ENCODE measurements at regions of chr9 and their contacts with region 1.

Region 1: GRCh38 chr9:121322037-121322775 is 47.8 kb downstream of the STOM start:
- DNase-seq: no peak
- H3K4me3 ChIP-seq: no peak overlapping the region
- H3K27ac ChIP-seq: peak overlapping the region in 1 of 2 experiments; percentile 81; a peak in 2 of 4 replicates
- H3K4me1 ChIP-seq: peaks cover 0 to 5% of the 10 kb centered on the region in 2 experiments; a peak in 2 of 4 replicates
- H3K27me3 ChIP-seq: no peaks in the 10 kb centered on the region
- CTCF ChIP-seq: no peak
- EP300 ChIP-seq: no peak
- RAD21 ChIP-seq: no peak

Region 2: GRCh38 chr9:121278535-121279261 is 43.5 kb before region 1 on chr9:
- CTCF ChIA-PET with region 1: interaction called, 22 read pairs
- POLR2A ChIA-PET with region 1: no interaction called
- DNase-seq: peak; percentile 59
- H3K4me3 ChIP-seq: peak overlapping the region in 1 of 2 experiments; percentile 40; a peak in 2 of 4 replicates
- H3K27ac ChIP-seq: peak overlapping the region; percentile 90 to 95
- H3K4me1 ChIP-seq: peaks cover 33 to 75% of the 10 kb centered on the region in 2 experiments
- H3K27me3 ChIP-seq: no peaks in the 10 kb centered on the region
- CTCF ChIP-seq: peak; percentile 86
- EP300 ChIP-seq: peak; percentile 29 to 74; a peak in 1 of 4 replicates
- RAD21 ChIP-seq: peak; percentile 61

Region 3: GRCh38 chr9:121340676-121341392 is 18.6 kb after region 1 on chr9:
- CTCF ChIA-PET with region 1: interaction called, 36 read pairs
- POLR2A ChIA-PET with region 1: no interaction called
- DNase-seq: no peak
- H3K4me3 ChIP-seq: no peak overlapping the region
- H3K27ac ChIP-seq: no peak overlapping the region
- H3K4me1 ChIP-seq: peaks cover 8 to 17% of the 10 kb centered on the region in 2 experiments; a peak in 2 of 4 replicates
- H3K27me3 ChIP-seq: no peaks in the 10 kb centered on the region
- CTCF ChIP-seq: no peak
- EP300 ChIP-seq: no peak
- RAD21 ChIP-seq: no peak

Region 4: DNA sequence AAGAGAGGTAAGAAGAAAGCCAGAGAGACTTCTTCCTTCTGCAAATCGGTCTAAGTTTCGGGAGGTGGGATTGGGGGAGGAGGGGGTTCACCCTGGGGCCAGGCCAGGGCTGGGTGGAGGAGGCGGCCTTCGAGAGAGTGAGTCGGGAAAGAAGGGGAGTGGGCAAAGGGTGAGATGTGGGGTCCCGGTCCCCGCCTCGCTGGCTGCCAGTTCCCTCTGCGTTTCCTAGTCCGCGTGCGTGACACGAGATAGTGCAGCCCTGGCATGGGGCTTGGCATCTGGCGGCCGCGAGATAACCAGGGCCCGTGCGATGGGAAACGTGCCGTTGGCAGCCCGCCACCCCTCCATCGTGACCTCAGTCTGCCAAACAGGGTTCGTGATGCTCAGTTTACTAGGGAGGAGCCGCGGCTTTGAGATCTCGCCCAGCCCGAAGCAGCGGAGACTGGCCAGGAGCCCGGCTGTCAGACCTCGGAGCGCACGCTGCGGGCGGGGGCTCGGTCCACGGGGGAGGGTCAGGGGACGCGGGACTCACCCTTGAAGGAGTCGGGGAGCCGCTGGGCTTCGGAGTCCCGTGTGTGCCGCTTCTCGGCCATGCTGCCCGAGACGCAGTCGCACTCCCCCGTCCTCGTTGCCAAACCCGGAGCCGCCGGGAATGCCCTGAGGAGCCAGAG is 47.5 kb after region 1 on chr9 and contains the start of gene STOM:
- CTCF ChIA-PET with region 1: interaction called, 97 read pairs
- POLR2A ChIA-PET with region 1: no interaction called
- DNase-seq: peak; percentile 78
- H3K4me3 ChIP-seq: peak within 1 kb of the TSS; percentile 57 to 64
- H3K27ac ChIP-seq: peak within 1 kb of the TSS; percentile 64 to 75
- H3K4me1 ChIP-seq: peaks cover 38 to 46% of the 10 kb centered on the region in 2 experiments
- H3K27me3 ChIP-seq: no peaks in the 10 kb centered on the region
- CTCF ChIP-seq: no peak
- EP300 ChIP-seq: no peak
- RAD21 ChIP-seq: no peak
- polyA plus RNA-seq, gene STOM: 40.5 and 49.7 TPM in 2 replicates

Region 5: GRCh38 chr9:121399883-121400607 is 77.8 kb after region 1 on chr9:
- CTCF ChIA-PET with region 1: interaction called, 316 read pairs
- POLR2A ChIA-PET with region 1: no interaction called
- DNase-seq: peak; percentile 37
- H3K4me3 ChIP-seq: peak overlapping the region in 1 of 2 experiments; percentile 28; a peak in 1 of 4 replicates
- H3K27ac ChIP-seq: peak overlapping the region in 1 of 2 experiments; percentile 74; a peak in 1 of 4 replicates
- H3K4me1 ChIP-seq: peaks cover 0 to 20% of the 10 kb centered on the region in 2 experiments; a peak in 1 of 4 replicates
- H3K27me3 ChIP-seq: no peaks in the 10 kb centered on the region
- CTCF ChIP-seq: peak; percentile 74
- EP300 ChIP-seq: no peak
- RAD21 ChIP-seq: peak; percentile 89

Region 6: GRCh38 chr9:121640076-121640475 is 317.9 kb after region 1 on chr9:
- CTCF ChIA-PET with region 1: no interaction called
- POLR2A ChIA-PET with region 1: no interaction called
- DNase-seq: peak; percentile 75
- H3K4me3 ChIP-seq: no peak overlapping the region
- H3K27ac ChIP-seq: no peak overlapping the region; a peak in 1 of 4 replicates
- H3K4me1 ChIP-seq: peaks cover 8 to 48% of the 10 kb centered on the region in 2 experiments; a peak in 3 of 4 replicates
- H3K27me3 ChIP-seq: no peaks in the 10 kb centered on the region
- CTCF ChIP-seq: peak; percentile 64
- EP300 ChIP-seq: no peak
- RAD21 ChIP-seq: peak; percentile 66

Measured in SK-N-SH (cell line).